BJ (cell line): ENCODE measurements at regions of chr18 and their contacts with region 1.

Region 1: DNA sequence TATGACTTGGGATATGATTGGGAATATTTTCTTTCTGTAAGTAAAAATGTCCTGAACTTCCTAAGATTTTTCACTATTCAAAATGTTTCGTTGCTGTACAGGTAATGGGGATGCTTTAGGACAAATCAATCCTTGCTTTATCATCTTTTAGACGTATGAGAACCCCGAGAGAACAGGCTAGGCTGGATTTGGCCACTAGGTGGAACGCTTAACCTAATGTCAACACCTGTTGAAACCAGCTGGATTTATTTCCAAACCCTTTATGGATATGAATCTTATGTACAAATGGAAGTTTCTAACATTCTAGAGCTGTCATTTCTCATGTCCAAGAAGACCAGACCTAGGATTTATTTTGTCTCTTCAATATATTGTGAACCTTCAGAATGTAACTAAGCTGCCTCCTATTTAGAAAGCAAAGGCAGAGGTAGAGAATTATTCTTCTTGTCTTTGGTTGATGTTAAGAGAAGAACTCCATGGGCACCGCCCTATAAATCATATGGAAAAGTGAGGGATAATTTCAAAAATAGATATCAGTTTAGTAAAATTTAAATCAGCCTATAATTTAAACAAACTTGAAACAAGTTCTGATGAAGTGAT is 96.7 kb downstream of the PMAIP1 start:
- DNase-seq: no peak
- H3K4me3 ChIP-seq: no peak overlapping the region
- H3K27me3 ChIP-seq: no peaks in the 10 kb centered on the region; the same call in 1 of the 2 replicates
- CTCF ChIP-seq: peak; percentile 85

Region 2: DNA sequence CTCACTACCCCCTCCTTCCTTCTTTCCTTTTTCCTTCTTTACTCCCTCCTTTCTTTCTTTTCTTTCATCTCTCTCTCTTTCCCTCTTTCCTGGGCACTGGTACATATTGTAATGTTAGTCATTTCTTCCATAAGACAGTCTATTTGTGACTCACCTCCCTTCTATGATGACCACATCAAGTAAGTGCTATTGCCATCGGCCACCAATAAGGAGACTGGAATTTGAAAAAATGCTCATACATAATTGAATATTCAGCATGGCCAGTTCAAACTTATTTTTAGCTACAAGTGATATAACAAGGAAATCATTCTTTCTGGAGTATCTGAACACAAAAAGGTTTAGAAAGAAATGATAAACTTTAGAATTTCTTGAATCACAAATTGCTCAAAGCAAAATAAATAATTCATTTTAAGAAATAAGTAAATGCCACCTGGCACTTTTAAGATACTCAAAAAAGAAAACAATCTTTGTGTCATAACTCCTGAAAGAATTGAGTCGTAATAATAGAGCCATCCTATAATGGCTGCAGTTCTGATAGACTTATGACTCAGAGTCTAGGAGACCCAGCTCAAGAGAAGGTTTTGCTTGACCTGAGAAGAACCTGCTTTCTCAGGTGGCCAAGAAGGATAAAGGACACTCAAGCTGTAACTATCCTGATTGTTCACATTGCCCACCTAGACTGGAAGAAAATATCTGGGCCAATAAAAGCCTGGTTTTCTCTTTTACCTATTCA is 247.7 kb before region 1 on chr18:
- CTCF ChIA-PET with region 1: no interaction called
- POLR2A ChIA-PET with region 1: no interaction called
- DNase-seq: peak; percentile 76
- H3K4me3 ChIP-seq: no peak overlapping the region
- H3K27me3 ChIP-seq: no peaks in the 10 kb centered on the region
- CTCF ChIP-seq: no peak

Region 3: GRCh38 chr18:59848002-59848401 is 148.5 kb before region 1 on chr18:
- CTCF ChIA-PET with region 1: no interaction called
- POLR2A ChIA-PET with region 1: no interaction called
- DNase-seq: no peak
- H3K4me3 ChIP-seq: no peak overlapping the region
- H3K27me3 ChIP-seq: no peaks in the 10 kb centered on the region
- CTCF ChIP-seq: no peak

Region 4: DNA sequence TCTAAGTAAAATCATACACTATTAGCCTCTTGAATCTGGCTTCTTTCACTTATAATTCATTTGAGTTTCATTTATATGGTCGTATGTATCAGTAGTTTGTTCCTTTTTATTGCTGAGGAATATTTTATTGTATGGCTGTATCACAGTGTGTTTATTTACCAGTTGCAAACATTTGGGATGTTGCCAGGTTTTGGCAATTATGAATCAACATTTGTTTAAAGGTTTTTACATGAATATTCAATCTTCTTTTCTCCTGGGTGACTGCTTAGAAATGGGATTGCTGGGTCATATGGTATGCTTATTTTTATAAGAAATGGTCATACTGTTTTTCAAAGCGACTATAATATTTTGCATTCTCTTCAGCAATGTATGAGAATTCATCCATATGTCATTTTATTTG is 11.2 kb after region 1 on chr18:
- CTCF ChIA-PET with region 1: interaction called, 10 read pairs
- POLR2A ChIA-PET with region 1: no interaction called
- DNase-seq: no peak
- H3K4me3 ChIP-seq: no peak overlapping the region
- H3K27me3 ChIP-seq: no peaks in the 10 kb centered on the region
- CTCF ChIP-seq: no peak

Region 5: DNA sequence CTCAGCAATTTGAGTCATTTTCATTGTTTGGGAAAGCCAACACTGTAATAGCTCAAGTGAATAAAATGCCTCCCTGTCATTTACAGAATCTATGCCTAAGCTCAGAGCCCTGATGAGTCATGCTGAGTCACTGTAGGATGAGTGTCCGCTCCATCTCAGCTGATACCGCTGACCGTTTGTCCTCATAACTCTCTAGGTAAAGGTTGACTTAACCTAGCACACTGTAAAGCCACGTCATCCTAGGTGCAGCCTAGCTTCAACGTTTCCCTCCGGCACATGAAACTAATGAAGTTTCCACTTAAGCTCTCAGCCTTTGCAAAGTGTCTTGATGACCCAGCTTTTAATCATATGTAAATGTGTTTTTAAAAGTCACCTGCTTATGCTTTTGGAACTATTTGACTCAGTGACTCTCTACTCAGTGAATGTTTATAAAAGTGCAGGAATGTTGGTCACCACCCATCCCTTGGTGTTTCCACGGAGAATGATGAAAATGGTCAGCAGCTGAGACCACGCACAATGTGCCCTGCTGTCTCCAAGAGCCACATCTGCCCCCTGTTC is 57.4 kb after region 1 on chr18:
- CTCF ChIA-PET with region 1: interaction called, 14 read pairs
- POLR2A ChIA-PET with region 1: no interaction called
- DNase-seq: peak; percentile 84
- H3K4me3 ChIP-seq: no peak overlapping the region
- H3K27me3 ChIP-seq: no peaks in the 10 kb centered on the region
- CTCF ChIP-seq: no peak

Region 6: GRCh38 chr18:60413944-60414547 is 417.6 kb after region 1 on chr18:
- CTCF ChIA-PET with region 1: interaction called, 19 read pairs
- POLR2A ChIA-PET with region 1: no interaction called
- DNase-seq: no peak
- H3K4me3 ChIP-seq: no peak overlapping the region
- H3K27me3 ChIP-seq: no peaks in the 10 kb centered on the region
- CTCF ChIP-seq: peak; percentile 57

Region 7: GRCh38 chr18:60549338-60549960 is 553.0 kb after region 1 on chr18:
- CTCF ChIA-PET with region 1: interaction called, 93 read pairs
- POLR2A ChIA-PET with region 1: no interaction called
- DNase-seq: peak; percentile 22
- H3K4me3 ChIP-seq: no peak overlapping the region
- H3K27me3 ChIP-seq: no peaks in the 10 kb centered on the region
- CTCF ChIP-seq: peak; percentile 73

Region 8: GRCh38 chr18:60554967-60555366 is 558.5 kb after region 1 on chr18:
- CTCF ChIA-PET with region 1: interaction called, 93 read pairs
- POLR2A ChIA-PET with region 1: no interaction called
- DNase-seq: no peak
- H3K4me3 ChIP-seq: no peak overlapping the region
- H3K27me3 ChIP-seq: no peaks in the 10 kb centered on the region
- CTCF ChIP-seq: no peak